ENCODE measurements at regions of chr14 and their contacts with region 1.

Region 1: GRCh38 chr14:38867561-38868150 is 235.4 kb downstream of the SEC23A start:
- DNase-seq: peak; percentile 47
- H3K4me3 ChIP-seq: no peak overlapping the region
- CTCF ChIP-seq: peak; percentile 81

Region 2: GRCh38 chr14:37903343-37904191 is 964.1 kb before region 1 on chr14:
- CTCF ChIA-PET with region 1: interaction called, 101 read pairs
- POLR2A ChIA-PET with region 1: no interaction called
- DNase-seq: peak; percentile 9
- H3K4me3 ChIP-seq: peak overlapping the region; percentile 15; the same call in 1 of the 2 replicates
- CTCF ChIP-seq: peak; percentile 25

Region 3: DNA sequence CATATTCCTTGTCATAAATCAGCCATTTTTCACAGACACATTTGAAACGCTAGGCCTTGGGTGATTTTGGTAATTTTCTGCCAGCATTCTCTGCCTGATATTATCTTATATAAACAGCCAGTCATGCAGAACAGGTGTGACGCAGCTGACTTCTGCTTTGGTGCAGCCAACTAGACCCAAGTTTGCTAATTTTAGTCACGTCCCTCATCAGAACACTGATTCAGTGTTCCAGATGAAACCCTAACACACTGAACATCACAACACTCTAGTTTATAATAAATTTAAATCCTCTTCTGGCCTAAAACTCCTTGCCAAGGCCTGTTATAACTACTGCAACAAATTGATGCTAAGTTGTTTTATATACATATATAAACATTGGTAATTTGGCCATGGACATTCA is 150.7 kb before region 1 on chr14:
- CTCF ChIA-PET with region 1: interaction called, 69 read pairs
- POLR2A ChIA-PET with region 1: no interaction called
- DNase-seq: no peak
- H3K4me3 ChIP-seq: no peak overlapping the region
- CTCF ChIP-seq: no peak

Region 4: DNA sequence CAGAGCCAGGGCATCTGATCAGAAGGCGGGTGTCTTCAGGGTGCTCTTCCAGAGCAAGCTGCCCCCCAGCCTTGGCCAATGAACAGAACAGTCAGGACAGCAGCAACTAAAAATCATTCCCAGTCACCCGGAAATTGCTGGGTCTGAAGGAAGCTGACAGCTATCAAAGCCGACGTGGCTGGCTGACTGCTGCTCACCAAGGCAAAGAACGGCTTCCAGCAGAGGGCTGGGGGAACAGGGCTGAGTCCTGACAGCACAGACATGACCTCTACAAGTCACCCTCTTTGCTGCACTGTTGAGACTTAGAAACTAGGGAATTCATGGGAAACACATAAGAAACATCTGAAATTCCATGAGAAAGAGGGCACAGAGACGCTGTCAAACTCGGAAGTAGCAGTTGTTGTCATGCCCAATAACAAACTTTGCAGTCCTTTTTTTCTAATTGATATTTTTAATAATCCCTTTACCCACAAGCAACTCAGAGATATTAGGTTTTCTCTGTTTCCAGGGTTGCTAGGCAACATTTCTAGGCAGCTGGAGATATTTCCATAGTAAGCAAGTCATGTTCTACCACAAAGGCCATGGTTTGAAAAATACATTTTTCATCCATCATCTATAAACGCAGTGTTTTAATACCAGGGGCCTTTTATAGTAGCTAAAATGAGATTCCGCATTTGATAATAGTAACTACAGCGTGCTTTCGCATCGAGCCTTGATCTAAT is 129.8 kb before region 1 on chr14:
- CTCF ChIA-PET with region 1: interaction called, 11 read pairs
- POLR2A ChIA-PET with region 1: no interaction called
- DNase-seq: no peak
- H3K4me3 ChIP-seq: no peak overlapping the region
- CTCF ChIP-seq: no peak

Region 5: DNA sequence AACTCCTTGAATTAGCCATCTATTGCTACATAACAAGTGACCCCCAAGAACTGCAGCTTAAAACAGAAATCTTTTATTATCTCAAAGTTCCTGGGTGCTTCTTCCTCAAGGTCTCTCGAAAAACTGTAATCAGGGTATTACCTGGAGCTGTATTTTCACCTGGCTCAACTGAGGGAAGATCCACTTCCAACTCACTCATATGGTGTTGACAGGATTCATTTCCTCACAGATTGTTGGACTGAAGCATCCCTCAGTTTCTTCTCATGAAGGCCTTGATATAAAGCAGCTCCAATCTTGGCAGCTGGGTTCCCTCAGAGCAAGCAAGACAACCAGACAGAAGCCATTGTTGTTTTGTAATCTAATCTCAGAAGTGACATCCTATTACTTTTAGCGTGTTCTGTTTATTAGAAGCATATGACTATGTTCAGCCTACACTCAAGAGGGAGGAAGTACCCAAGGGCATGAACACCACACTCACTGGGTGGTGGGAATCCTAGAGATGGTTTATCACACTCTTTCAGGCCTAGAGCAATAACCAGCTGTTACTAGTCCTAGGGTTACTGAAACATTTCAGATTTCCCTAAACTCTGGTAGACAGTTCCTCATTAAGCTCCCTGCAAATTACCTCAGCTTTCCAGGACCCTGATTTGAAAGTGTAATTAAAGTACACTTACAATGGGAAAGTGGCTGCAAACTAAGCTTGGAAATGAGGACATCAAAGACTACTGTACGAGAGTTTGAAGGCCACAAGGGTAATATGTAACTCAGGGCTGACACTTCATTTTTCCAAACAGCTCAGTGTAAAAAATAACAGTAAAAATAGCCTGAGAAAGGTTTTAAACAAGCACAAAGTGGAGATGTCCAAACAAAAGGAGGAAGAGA is 13.2 kb after region 1 on chr14:
- CTCF ChIA-PET with region 1: interaction called, 26 read pairs
- POLR2A ChIA-PET with region 1: no interaction called
- DNase-seq: no peak
- H3K4me3 ChIP-seq: no peak overlapping the region
- CTCF ChIP-seq: no peak

Region 6: DNA sequence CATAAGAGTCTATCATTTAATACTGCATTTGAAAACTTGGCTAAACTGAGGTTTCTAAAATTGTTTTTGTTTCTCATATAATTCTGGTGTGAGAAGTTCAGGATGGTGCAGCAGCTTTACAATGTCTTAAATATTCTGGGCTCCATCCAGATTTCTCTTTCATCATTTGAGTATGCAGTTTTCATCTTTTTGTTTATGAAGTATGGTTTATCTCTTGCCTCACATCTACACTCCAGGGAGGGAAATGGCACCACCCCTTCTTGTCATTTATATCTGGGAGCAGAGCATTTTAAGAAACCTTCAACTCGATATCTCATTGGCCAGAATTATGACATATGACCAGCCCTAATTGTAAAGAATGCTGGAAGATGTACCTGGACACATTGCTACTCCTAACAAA is 270.8 kb after region 1 on chr14:
- CTCF ChIA-PET with region 1: no interaction called
- POLR2A ChIA-PET with region 1: no interaction called
- DNase-seq: no peak
- H3K4me3 ChIP-seq: no peak overlapping the region
- CTCF ChIP-seq: no peak

Measured in AG04449 (cell line).